ENCODE measurements at regions of chr17 and their contacts with region 1.

Region 1: GRCh38 chr17:8041249-8041928 is 2.5 kb downstream of the ALOX15B start:
- DNase-seq: peak; percentile 73
- H3K4me3 ChIP-seq: no peak overlapping the region
- H3K27ac ChIP-seq: peak overlapping the region in 1 of 2 experiments; percentile 53; a peak in 2 of 4 replicates
- H3K4me1 ChIP-seq: peaks cover 5 to 8% of the 10 kb centered on the region in 2 experiments; a peak in 2 of 4 replicates
- H3K27me3 ChIP-seq: peaks cover 6% of the 10 kb centered on the region
- CTCF ChIP-seq: peak; percentile 76
- EP300 ChIP-seq: no peak
- RAD21 ChIP-seq: peak; percentile 86

Region 2: DNA sequence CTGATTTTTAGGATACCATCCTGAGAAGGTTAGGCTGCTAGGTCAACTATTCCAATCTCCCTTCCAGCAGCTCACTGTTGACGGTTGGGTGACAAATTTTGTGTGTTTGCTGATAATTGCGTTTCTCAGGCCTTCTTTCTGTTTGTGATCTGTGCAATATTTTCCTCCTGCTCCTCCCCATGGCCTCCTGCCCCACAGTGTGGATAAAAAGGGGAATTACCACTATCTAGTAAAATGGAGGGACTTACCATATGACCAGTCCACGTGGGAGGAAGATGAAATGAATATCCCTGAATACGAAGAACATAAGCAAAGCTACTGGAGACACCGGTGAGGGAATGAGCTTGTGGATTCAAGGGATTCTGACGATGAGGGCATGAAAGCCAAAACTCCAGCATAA is 143.6 kb before region 1 on chr17:
- CTCF ChIA-PET with region 1: interaction called, 14 read pairs
- POLR2A ChIA-PET with region 1: no interaction called
- DNase-seq: peak; percentile 72
- H3K4me3 ChIP-seq: no peak overlapping the region
- H3K27ac ChIP-seq: no peak overlapping the region; a peak in 1 of 4 replicates
- H3K4me1 ChIP-seq: no peaks in the 10 kb centered on the region
- H3K27me3 ChIP-seq: no peaks in the 10 kb centered on the region
- CTCF ChIP-seq: peak; percentile 70
- EP300 ChIP-seq: no peak
- RAD21 ChIP-seq: peak; percentile 92

Region 3: GRCh38 chr17:7931709-7932482 is 109.5 kb before region 1 on chr17 and contains the starts of genes CNTROB and TRAPPC1:
- CTCF ChIA-PET with region 1: interaction called, 20 read pairs
- POLR2A ChIA-PET with region 1: no interaction called
- DNase-seq: peak; percentile 98
- H3K4me3 ChIP-seq: peak within 1 kb of the TSS; percentile 99 to 100
- H3K27ac ChIP-seq: peak within 1 kb of the TSS; percentile 75 to 87
- H3K4me1 ChIP-seq: peaks cover 21 to 38% of the 10 kb centered on the region in 2 experiments; a peak in 3 of 4 replicates
- H3K27me3 ChIP-seq: no peaks in the 10 kb centered on the region
- CTCF ChIP-seq: no peak
- EP300 ChIP-seq: no peak
- RAD21 ChIP-seq: no peak
- polyA plus RNA-seq, gene CNTROB: 26.3 and 27.4 TPM in 2 replicates
- polyA plus RNA-seq, gene TRAPPC1: 390 and 555 TPM in 2 replicates

Region 4: DNA sequence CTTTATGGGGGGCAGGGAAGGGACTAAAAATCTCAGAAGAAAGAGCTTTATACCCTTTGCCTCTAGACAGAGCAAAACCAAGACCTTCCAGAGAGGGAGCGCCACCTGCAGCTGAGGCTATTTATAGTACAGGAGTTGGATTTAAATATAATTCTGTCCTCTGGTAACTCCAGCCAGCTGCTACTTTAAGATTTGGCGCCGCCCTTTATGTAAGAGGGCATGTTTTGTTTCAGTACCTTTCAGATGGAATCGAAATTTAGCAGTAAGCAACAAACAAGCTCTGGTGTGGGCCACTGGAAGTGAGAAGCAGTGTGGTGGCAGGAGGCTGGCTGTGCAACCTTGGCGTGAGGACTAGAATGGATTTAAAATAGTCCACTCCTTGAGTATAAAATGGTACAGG is 44.2 kb before region 1 on chr17:
- CTCF ChIA-PET with region 1: interaction called, 18 read pairs
- POLR2A ChIA-PET with region 1: no interaction called
- DNase-seq: no peak
- H3K4me3 ChIP-seq: no peak overlapping the region
- H3K27ac ChIP-seq: no peak overlapping the region
- H3K4me1 ChIP-seq: peaks cover 0 to 2% of the 10 kb centered on the region in 2 experiments; a peak in 1 of 4 replicates
- H3K27me3 ChIP-seq: peaks cover 12% of the 10 kb centered on the region; the same call in 1 of the 2 replicates
- CTCF ChIP-seq: 0 out of 2 replicates have a peak, but pooled peaks have one; percentile 36
- EP300 ChIP-seq: no peak
- RAD21 ChIP-seq: no peak

Region 5: GRCh38 chr17:8016632-8017478 is 24.5 kb before region 1 on chr17:
- CTCF ChIA-PET with region 1: interaction called, 228 read pairs
- POLR2A ChIA-PET with region 1: no interaction called
- DNase-seq: peak; percentile 82
- H3K4me3 ChIP-seq: peak overlapping the region; percentile 45 to 53
- H3K27ac ChIP-seq: no peak overlapping the region
- H3K4me1 ChIP-seq: peaks cover 0 to 15% of the 10 kb centered on the region in 2 experiments; a peak in 1 of 4 replicates
- H3K27me3 ChIP-seq: no peaks in the 10 kb centered on the region
- CTCF ChIP-seq: peak; percentile 72
- EP300 ChIP-seq: no peak
- RAD21 ChIP-seq: peak; percentile 76

Region 6: DNA sequence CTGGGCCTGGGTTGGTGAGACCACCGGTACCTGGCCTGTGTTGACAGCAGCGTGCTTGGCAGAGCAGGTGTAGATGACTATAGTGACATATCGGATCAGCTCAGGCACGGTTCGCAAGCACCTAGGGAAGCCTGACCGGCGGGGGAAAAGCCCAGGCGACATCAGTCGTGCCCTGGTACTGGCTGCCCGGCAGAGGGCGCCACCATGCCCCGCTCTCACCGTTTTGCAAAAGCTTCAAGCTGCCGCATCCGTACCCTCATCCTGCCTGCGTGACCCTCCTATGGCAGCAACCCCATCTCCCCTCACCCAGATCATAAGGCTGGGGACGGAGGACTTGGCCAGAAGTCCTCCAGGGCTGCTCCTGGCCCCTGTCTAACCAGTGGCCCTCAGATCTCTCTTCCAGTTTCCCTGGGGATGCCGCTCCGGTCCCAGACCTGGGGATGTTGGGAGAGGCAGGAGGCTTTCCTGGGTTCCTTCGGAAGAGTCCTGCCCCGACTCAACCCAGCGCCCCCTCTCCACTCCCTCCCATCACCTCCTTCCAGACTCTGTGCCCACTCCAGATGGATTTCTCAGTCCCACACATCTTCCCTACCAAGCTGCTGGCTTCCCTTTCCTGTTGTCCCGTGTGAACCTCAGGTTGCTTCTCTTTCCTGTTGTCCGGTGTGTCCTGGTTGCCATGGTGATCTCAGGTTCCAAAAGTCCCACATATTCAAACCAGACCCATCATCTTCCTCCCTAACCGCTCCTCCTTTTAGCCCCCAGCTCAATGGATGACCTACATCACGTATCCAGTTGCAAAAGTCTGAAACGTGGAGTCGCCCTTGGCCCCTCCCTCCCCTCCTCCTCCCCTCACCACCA is 32.5 kb after region 1 on chr17:
- CTCF ChIA-PET with region 1: interaction called, 25 read pairs
- POLR2A ChIA-PET with region 1: no interaction called
- DNase-seq: peak; percentile 89
- H3K4me3 ChIP-seq: peak overlapping the region in 1 of 2 experiments; percentile 26; a peak in 1 of 4 replicates
- H3K27ac ChIP-seq: no peak overlapping the region
- H3K4me1 ChIP-seq: peaks cover 0 to 8% of the 10 kb centered on the region in 2 experiments; a peak in 1 of 4 replicates
- H3K27me3 ChIP-seq: peaks cover 64% of the 10 kb centered on the region
- CTCF ChIP-seq: peak; percentile 89
- EP300 ChIP-seq: no peak
- RAD21 ChIP-seq: peak; percentile 41

Measured in SK-N-SH (cell line).